ENCODE measurements at regions of chr1 and their contacts with region 1.

Region 1: GRCh38 chr1:8314346-8315280 is 3.3 kb upstream of the SLC45A1 start:
- DNase-seq: peak; percentile 83 to 89
- ATAC-seq: peak; percentile 77
- H3K4me3 ChIP-seq: no peak overlapping the region
- H3K27ac ChIP-seq: no peak overlapping the region
- H3K4me1 ChIP-seq: no peaks in the 10 kb centered on the region
- H3K27me3 ChIP-seq: no peaks in the 10 kb centered on the region

Region 2: GRCh38 chr1:8015036-8015808 is 299.4 kb before region 1 on chr1:
- intact Hi-C with region 1: loop called in 1 of 2 experiments (anchors 5 kb)
- DNase-seq: no peak
- ATAC-seq: peak; percentile 83
- H3K4me3 ChIP-seq: no peak overlapping the region
- H3K27ac ChIP-seq: peak overlapping the region in 1 of 2 donors; percentile 68
- H3K4me1 ChIP-seq: peaks cover 3 to 15% of the 10 kb centered on the region in 2 donors
- H3K27me3 ChIP-seq: no peaks in the 10 kb centered on the region

Region 3: DNA sequence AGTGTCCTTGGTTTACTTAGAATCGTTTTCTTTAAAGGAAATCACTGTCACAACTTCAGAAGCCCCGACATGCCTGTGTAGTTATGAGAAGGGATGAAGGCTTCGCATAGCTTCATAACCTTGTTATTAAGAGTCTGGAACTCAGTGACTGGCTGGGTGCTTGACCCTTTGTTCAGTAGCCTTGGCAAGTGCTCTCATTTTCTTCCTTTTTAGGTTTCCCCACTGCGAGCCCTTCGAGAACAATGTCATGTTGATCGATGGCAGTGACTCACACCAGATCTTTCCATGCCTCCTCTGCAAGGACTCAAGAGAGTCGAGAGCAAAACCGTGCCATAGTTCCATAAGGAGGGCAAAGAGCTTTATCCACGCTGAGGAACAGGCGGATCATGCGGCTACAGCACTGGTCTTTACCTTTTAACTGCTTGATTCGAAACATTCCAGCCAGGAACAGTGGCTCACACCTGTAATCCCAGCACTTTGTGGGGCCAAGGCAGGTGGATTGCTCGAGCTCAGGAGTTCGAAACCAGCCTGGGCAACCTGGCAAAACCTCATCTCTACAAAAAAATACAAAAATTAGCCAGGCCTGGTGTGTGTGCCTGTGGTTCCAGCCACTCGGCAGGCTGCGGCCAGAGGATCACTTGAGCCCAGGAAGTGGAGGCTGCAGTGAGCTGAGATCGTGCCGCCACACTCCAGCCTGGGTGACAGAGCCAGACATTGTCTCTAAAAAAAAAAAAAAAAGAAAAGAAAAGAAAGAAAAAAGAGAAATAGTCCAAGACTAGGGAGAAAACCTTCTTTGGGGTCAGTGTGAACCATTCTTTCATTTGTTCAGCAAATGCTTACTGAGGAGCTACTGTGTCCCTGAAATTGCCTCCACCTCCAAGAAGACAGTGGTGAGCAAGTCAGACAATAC is 193.1 kb before region 1 on chr1:
- intact Hi-C with region 1: loop called in 1 of 2 experiments (anchors 5 kb)
- DNase-seq: peak; percentile 76 to 77
- ATAC-seq: peak; percentile 87
- H3K4me3 ChIP-seq: no peak overlapping the region
- H3K27ac ChIP-seq: peak overlapping the region; percentile 88 to 99
- H3K4me1 ChIP-seq: peaks cover 8 to 21% of the 10 kb centered on the region in 2 donors
- H3K27me3 ChIP-seq: no peaks in the 10 kb centered on the region

Region 4: DNA sequence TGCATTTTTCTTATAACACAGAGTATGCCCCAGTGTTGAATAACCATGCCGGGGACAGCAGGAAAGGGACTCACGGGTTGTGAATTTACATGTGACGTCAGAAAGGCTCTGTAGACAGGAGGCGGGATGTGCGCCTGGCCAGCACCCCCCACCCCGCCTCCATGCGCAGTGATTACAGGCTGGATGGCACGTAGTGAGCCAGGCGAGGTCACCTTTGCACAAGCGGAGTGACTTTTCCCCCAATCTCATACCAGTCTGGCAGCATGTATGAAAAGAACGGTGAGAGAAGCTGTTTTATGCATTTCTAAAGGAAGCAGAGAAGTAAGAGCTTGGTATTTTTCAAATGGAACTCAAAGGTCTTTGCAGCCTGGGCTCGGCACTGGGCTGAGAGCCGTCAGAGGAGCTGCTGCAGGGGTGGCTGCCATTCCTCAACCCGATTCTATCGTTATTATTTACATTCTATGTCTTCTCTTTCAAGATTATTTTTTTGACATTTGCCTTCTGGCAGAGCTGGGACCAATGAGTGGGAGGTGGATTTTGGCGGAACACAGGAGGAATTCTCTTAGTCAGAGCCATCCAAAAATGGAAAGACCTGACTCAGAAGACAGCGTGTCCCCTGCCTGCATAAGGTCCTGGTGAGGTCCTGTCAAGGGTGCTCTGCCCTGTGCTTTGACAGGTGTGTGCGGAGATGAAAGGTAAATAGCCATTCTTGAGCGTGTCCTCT is 112.3 kb before region 1 on chr1:
- intact Hi-C with region 1: loop called in 1 of 2 experiments (anchors 5 kb)
- DNase-seq: peak; percentile 88 to 89
- ATAC-seq: peak; percentile 85
- H3K4me3 ChIP-seq: no peak overlapping the region
- H3K27ac ChIP-seq: peak overlapping the region; percentile 97 to 100
- H3K4me1 ChIP-seq: peaks cover 2 to 8% of the 10 kb centered on the region in 2 donors
- H3K27me3 ChIP-seq: no peaks in the 10 kb centered on the region